Caco-2 (cell line): ENCODE measurements at regions of chr6 and their contacts with region 1.

Region 1: GRCh38 chr6:119034827-119035458 is 43.5 kb downstream of the FAM184A start:
- DNase-seq: peak in 1 of 2 experiments; percentile 25
- H3K4me3 ChIP-seq: 0 out of 2 replicates have a peak overlapping the region, but pooled peaks have one; percentile 7
- H3K4me3 Mint-ChIP-seq: peak overlapping the region; percentile 64
- H3K27ac Mint-ChIP-seq: peak overlapping the region; percentile 48
- H3K4me1 ChIP-seq: peaks cover 46% of the 10 kb centered on the region
- H3K4me1 Mint-ChIP-seq: peaks cover 33% of the 10 kb centered on the region
- H3K27me3 ChIP-seq: no peaks in the 10 kb centered on the region
- H3K27me3 Mint-ChIP-seq: no peaks in the 10 kb centered on the region
- CTCF ChIP-seq: no peak

Region 2: DNA sequence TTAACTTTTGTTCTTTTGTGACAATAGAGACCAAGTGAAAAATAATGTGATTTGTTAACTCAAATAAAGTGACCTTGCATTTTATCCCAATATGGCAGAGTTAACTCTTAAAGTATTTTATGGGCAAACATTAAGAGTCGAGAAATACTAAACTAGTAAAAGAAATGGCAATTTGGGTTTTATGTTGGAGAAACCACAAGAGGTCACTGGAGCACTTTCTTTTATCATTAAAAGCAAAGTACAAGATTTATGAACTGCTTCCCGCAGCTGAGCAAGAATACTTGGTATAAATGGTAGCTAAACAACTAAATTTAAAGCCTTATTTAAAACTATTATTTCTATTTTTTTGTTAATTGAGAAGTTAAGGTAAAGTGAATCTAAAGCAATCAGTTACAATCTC is 66.5 kb before region 1 on chr6:
- CTCF ChIA-PET with region 1: interaction called, 6 read pairs
- POLR2A ChIA-PET with region 1: no interaction called
- intact Hi-C with region 1: loop called (anchors 1 kb)
- DNase-seq: peak in 1 of 2 experiments; percentile 12
- H3K4me3 ChIP-seq: no peak overlapping the region
- H3K4me3 Mint-ChIP-seq: no peak overlapping the region
- H3K27ac Mint-ChIP-seq: no peak overlapping the region
- H3K4me1 ChIP-seq: 0 out of 2 replicates have a peak, but pooled peaks cover 7% of the 10 kb centered on the region
- H3K4me1 Mint-ChIP-seq: no peaks in the 10 kb centered on the region
- H3K27me3 ChIP-seq: no peaks in the 10 kb centered on the region
- H3K27me3 Mint-ChIP-seq: no peaks in the 10 kb centered on the region
- CTCF ChIP-seq: peak; percentile 29 to 35

Region 3: GRCh38 chr6:119052292-119052889 is 17.4 kb after region 1 on chr6:
- CTCF ChIA-PET with region 1: interaction called, 4 read pairs
- POLR2A ChIA-PET with region 1: no interaction called
- intact Hi-C with region 1: loop called (anchors 2 kb)
- DNase-seq: no peak
- H3K4me3 ChIP-seq: no peak overlapping the region
- H3K4me3 Mint-ChIP-seq: no peak overlapping the region
- H3K27ac Mint-ChIP-seq: no peak overlapping the region
- H3K4me1 ChIP-seq: no peaks in the 10 kb centered on the region
- H3K4me1 Mint-ChIP-seq: no peaks in the 10 kb centered on the region
- H3K27me3 ChIP-seq: no peaks in the 10 kb centered on the region
- H3K27me3 Mint-ChIP-seq: no peaks in the 10 kb centered on the region
- CTCF ChIP-seq: no peak

Region 4: DNA sequence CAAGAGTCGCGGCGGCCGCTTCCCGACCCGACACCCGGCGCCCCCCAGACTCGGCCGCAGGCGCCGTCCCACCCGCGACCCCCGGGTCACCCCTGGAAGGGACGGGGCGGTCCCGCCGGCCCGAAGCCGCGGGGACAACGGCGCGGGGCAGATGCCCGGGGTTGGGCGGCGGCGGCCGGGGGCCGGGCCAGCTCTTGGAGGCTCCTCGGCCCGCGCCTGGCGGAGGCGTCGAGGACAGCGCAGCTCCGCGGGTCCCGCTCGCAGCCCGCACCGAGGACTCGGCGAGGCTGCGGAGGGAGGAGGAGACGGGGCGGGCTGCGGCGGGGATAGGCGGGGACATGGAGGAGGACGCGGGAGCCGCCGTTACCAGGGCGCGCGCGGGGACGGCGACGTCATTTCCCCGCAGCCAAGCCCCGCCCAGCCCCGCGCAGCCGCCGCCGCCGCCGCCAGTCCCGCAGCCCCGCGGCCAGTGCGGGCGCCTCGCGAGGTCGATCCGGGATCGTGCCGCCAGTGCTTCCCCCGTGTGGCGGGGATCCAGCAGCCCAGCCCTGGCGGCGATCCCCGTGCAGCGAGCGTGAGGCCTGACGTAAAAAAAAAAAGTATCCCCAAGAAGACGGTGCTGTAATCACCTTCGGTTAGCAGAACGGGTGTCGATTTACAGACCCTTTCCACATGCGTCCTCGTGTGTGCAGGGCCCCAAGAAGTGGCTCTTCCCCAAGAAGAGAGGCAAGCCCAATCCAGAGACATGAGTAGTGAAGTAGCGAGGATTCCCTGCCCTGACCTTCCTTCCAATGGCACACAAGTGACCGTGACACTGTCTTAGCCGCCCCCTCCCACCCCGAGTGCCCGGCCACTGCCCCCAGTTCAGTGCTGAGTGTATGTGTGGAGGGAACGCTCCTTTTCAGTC is 43.7 kb after region 1 on chr6 and contains the start of gene FAM184A:
- CTCF ChIA-PET with region 1: interaction called, 7 read pairs
- POLR2A ChIA-PET with region 1: no interaction called
- intact Hi-C with region 1: loop called (anchors 2 kb)
- DNase-seq: peak; percentile 74 to 86
- H3K4me3 ChIP-seq: peak within 1 kb of the TSS; percentile 93
- H3K4me3 Mint-ChIP-seq: peak within 1 kb of the TSS; percentile 89
- H3K27ac Mint-ChIP-seq: peak within 1 kb of the TSS; percentile 82
- H3K4me1 ChIP-seq: peaks cover 10% of the 10 kb centered on the region; the same call in 1 of the 2 replicates
- H3K4me1 Mint-ChIP-seq: peaks cover 7% of the 10 kb centered on the region
- H3K27me3 ChIP-seq: no peaks in the 10 kb centered on the region
- H3K27me3 Mint-ChIP-seq: no peaks in the 10 kb centered on the region
- CTCF ChIP-seq: peak; percentile 23 to 64
- total RNA-seq, gene FAM184A: 10.8 and 11.2 TPM in 2 replicates